Activated CD8-positive, alpha-beta memory T cell treated with anti-CD3 and anti-CD28 coated beads, Interleukin-2, amount 10 ng/mL, durations not matched to agents 7 days and 5 days (primary cell): ENCODE measurements at regions of chr1 and their contacts with region 1.

Region 1: DNA sequence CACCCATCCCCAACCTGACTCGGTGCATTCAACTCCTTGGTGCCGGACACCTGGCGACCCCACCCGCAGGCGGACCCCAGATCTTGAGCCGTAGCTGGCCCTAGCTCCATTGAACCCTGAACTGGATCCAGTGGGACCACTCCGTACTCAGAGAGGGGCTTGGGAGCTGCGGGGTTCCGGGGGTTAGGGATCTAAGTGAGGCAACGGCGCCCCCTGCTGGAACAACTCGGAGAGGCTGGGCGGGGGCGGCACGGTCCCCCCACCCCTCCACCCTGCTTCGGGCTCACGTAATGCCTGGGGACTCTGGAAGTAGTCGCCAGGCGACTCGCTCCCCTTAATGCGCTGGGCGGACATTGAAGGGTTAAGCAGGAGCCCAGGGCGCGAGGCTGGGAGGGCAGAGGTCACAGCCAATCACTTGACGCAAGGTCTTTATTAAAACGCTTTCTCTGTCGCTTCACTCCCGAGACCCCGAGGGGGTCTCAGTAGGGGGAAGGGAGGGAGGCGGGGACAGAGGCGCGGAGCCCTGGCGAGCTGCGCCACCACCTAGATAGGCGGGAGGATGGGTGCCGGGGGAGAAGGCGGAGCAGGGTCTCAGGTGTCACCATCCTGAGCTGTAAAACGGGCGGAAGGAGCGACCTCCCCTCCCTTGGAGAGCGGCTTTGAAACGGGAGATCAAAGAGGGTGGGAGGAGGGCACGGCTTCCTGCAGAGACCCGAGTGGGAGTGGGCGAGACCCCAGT is 704 bp upstream of the CRABP2 start:
- DNase-seq: peak; percentile 70
- ATAC-seq: peak; percentile 77
- H3K4me3 Mint-ChIP-seq: peak overlapping the region; percentile 56
- H3K27ac Mint-ChIP-seq: no peak overlapping the region
- H3K4me1 Mint-ChIP-seq: peaks cover 20% of the 10 kb centered on the region
- H3K27me3 Mint-ChIP-seq: peaks cover 43% of the 10 kb centered on the region

Region 2: GRCh38 chr1:156677616-156678596 is 28.2 kb before region 1 on chr1:
- CTCF ChIA-PET with region 1: interaction called, 25 read pairs
- DNase-seq: no peak
- ATAC-seq: peak; percentile 31
- H3K4me3 Mint-ChIP-seq: no peak overlapping the region
- H3K27ac Mint-ChIP-seq: no peak overlapping the region
- H3K4me1 Mint-ChIP-seq: peaks cover 7% of the 10 kb centered on the region
- H3K27me3 Mint-ChIP-seq: peaks cover 88% of the 10 kb centered on the region

Region 3: GRCh38 chr1:156717275-156717805 is 11.3 kb after region 1 on chr1:
- CTCF ChIA-PET with region 1: interaction called, 22 read pairs
- DNase-seq: no peak
- ATAC-seq: no peak
- H3K4me3 Mint-ChIP-seq: no peak overlapping the region
- H3K27ac Mint-ChIP-seq: no peak overlapping the region
- H3K4me1 Mint-ChIP-seq: peaks cover 15% of the 10 kb centered on the region
- H3K27me3 Mint-ChIP-seq: no peaks in the 10 kb centered on the region